ENCODE measurements at regions of chr3 and their contacts with region 1.

Region 1: DNA sequence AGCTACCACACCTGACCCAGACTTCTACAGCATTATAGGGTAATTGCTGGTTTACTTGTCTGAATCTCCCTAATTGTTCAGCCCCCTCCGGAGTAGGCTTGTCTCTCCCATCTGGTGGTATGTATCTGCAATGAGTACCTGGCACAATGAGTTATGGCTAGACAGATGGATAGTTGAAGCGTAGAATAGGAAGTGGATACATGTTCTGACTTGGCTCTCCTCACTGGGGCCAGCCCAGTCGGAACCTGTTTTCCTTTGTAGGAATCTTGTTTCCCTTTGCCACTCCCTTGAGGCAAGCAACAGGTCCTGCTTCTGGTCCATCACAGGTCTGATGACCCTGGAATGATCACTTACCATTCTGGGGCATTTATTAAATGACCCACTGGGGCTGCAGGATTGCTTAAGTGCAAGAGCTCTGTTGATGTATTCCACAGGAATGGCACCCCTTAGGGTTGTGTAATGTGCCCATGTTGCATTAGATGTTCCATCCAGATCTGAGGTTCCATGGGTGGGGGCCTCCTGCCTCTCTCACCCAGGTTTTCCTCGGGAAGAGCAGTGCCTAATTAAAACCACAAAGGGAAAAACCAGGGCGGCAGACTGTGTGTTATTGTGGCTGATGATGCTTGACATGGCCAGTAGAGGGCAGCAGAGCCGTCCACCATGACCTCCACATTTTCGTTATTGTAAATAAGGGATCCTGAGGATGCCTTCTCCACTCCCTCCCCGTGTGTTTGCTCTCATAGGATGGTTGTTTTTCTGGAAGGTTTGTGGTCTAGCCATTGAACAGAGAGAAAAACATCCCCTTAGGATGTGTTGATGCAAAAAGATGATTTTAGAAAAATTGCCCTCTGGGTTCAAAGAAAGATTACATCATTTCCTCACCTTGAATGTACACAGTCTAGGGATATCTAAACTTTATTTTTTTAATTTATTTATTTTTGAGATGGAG is 58.0 kb downstream of the CMTM8 start:
- DNase-seq: peak; percentile 40
- ATAC-seq: peak; percentile 82
- H3K4me3 Mint-ChIP-seq: no peak overlapping the region
- H3K27ac Mint-ChIP-seq: no peak overlapping the region
- H3K4me1 Mint-ChIP-seq: peaks cover 4% of the 10 kb centered on the region
- H3K27me3 Mint-ChIP-seq: no peaks in the 10 kb centered on the region
- CTCF ChIP-seq: peak; percentile 88

Region 2: DNA sequence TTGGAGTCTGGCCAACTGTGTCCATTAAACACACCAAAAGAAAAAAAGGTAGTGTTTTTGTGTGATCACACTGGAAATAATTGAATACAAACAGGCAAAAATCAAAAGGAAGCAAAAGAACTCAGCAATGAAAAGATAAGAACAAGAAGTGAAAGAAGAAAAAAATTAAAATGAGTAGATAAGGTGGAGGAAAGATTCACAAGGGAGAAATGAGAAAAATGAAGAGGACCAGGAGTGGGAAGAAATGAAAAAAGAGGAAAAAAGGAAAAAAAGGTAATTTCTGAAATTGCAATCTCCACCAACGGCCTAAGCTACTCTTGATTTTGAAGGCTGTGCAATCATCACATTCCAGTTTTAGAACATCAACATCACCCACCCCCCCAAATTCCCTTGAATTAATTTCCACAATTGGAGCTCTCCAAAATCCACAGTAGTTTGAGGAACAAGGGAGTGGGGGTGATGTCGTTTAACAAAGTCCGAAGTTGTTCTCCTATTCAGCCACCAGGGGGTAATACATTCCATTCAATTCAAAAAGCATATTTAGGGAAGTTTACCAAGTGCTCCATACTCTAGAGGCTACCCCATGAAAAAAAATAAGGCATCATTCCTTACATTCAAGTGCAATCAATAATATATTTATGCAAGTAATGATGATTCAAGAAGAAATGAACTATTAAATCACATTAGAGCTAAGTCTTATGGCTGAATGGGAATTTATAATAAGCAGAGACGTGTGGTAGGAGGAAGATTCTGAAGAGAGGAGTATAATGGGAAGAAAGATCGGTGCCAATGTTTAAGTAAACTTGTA is 277.6 kb before region 1 on chr3:
- CTCF ChIA-PET with region 1: no interaction called
- POLR2A ChIA-PET with region 1: no interaction called
- intact Hi-C with region 1: no loop called
- DNase-seq: no peak
- ATAC-seq: peak; percentile 65
- H3K4me3 Mint-ChIP-seq: no peak overlapping the region
- H3K27ac Mint-ChIP-seq: no peak overlapping the region
- H3K4me1 Mint-ChIP-seq: peaks cover 12% of the 10 kb centered on the region
- H3K27me3 Mint-ChIP-seq: no peaks in the 10 kb centered on the region
- CTCF ChIP-seq: no peak

Region 3: GRCh38 chr3:32340039-32340438 is 43.5 kb after region 1 on chr3:
- CTCF ChIA-PET with region 1: no interaction called
- POLR2A ChIA-PET with region 1: no interaction called
- intact Hi-C with region 1: loop called (anchors 2 kb)
- DNase-seq: no peak
- ATAC-seq: no peak
- H3K4me3 Mint-ChIP-seq: no peak overlapping the region
- H3K27ac Mint-ChIP-seq: no peak overlapping the region
- H3K4me1 Mint-ChIP-seq: no peaks in the 10 kb centered on the region
- H3K27me3 Mint-ChIP-seq: no peaks in the 10 kb centered on the region
- CTCF ChIP-seq: no peak

Region 4: GRCh38 chr3:32401556-32402081 is 105.1 kb after region 1 on chr3:
- CTCF ChIA-PET with region 1: interaction called, 5 read pairs
- POLR2A ChIA-PET with region 1: no interaction called
- intact Hi-C with region 1: loop called (anchors 1 kb)
- DNase-seq: peak; percentile 45
- ATAC-seq: peak; percentile 71
- H3K4me3 Mint-ChIP-seq: peak overlapping the region; percentile 89
- H3K27ac Mint-ChIP-seq: peak overlapping the region; percentile 97
- H3K4me1 Mint-ChIP-seq: peaks cover 86% of the 10 kb centered on the region
- H3K27me3 Mint-ChIP-seq: no peaks in the 10 kb centered on the region
- CTCF ChIP-seq: no peak

Region 5: DNA sequence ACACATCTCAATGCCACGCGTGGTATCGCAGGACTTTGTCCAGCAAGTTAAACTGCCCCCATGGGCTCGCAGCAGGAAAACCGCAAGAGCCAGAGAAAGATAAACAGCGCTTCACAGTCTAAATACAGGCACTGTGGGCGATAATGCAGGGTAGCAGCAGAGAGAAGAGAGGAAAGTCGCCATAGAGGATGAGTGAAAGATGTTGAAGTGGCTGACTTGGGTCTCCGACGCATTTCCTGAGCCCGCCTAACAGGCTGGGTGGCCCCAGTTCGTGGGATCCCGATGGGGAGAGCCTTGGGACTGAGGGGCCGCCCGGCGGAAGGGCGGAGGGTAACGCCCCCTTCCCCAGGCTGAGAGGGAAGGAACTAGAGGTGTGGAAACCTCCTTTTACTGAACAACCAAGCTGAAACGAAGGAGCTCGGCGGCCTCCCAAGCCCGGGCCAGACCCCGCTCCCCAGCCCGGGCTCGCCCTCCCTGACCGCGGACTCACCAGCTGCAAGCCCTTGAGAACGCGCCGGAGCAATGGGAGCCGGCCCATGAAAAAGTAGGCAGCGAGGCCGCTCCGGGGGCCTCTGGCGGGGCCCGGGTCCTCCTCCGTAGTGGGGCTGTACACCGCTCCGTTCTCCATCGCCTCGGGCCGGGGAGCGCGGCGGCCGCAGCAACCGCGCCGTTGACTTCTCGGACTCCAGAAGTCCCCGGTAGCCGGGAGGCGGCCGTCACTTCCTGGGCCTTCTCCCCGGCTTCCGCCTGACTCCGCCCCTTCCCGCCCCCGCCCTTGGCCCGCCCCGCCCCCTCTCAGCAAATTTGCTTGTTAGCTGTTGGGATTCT is 205.8 kb after region 1 on chr3 and contains the start of gene CMTM6:
- CTCF ChIA-PET with region 1: no interaction called
- POLR2A ChIA-PET with region 1: no interaction called
- intact Hi-C with region 1: loop called (anchors 10 kb)
- DNase-seq: peak; percentile 67
- ATAC-seq: peak; percentile 80
- H3K4me3 Mint-ChIP-seq: peak within 1 kb of the TSS; percentile 98
- H3K27ac Mint-ChIP-seq: peak within 1 kb of the TSS; percentile 90
- H3K4me1 Mint-ChIP-seq: peaks cover 41% of the 10 kb centered on the region
- H3K27me3 Mint-ChIP-seq: no peaks in the 10 kb centered on the region
- CTCF ChIP-seq: no peak
- total RNA-seq, gene CMTM6: 84.6 and 90.1 TPM in 2 replicates

Region 6: DNA sequence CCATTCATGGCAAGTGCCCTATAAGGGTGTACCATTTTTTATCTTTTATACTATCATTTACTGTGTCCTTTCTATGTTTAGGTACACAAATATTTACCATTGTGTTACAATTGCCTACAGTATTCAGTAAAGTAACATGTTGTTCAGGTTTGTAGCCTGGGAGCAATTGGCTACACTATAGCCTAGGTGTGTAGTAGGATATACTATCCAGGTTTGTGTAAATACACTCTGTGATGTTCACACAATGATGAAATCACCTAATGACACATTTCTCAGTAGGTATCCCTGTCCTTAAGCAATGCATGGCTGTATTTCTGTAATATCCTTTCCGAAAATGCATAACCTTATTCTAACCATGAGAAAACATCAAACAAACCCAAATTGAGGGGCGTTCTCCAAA is 370.6 kb after region 1 on chr3:
- CTCF ChIA-PET with region 1: interaction called, 3 read pairs
- POLR2A ChIA-PET with region 1: no interaction called
- intact Hi-C with region 1: loop called (anchors 1 kb)
- DNase-seq: no peak
- ATAC-seq: no peak
- H3K4me3 Mint-ChIP-seq: no peak overlapping the region
- H3K27ac Mint-ChIP-seq: no peak overlapping the region
- H3K4me1 Mint-ChIP-seq: no peaks in the 10 kb centered on the region
- H3K27me3 Mint-ChIP-seq: peaks cover 6% of the 10 kb centered on the region
- CTCF ChIP-seq: no peak

Measured in activated B cell treated with CpG ODN at 0.5 μM for 24 hours (primary cell).